MCF 10A (cell line): ENCODE measurements at regions of chr11 and their contacts with region 1.

Region 1: GRCh38 chr11:45771566-45772448 is 33.1 kb upstream of the SLC35C1 start:
- DNase-seq: peak; percentile 79
- H3K4me3 Mint-ChIP-seq: peak overlapping the region; percentile 82
- H3K27ac Mint-ChIP-seq: peak overlapping the region; percentile 70
- H3K4me1 Mint-ChIP-seq: peaks cover 12% of the 10 kb centered on the region
- H3K27me3 Mint-ChIP-seq: no peaks in the 10 kb centered on the region
- CTCF ChIP-seq: peak; percentile 95

Region 2: DNA sequence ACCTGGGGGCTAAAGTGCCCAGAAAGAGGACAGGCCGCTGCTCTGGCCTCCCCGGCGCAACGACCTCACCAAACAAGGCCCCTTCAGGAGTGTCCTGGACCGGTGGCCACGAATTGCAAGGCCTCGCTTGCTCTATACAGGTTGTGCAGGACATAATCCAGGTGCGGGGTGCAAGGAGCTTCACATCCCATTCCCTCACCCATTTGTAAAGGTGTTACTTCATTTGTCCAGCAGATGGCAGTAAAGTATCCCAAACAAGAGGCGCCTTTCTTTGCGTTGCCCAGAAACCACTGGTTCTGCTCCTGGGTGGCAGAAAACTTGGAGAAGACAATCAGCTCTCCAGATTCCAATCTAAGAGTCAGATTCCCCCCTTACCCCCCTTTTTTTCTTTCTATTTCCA is 661.2 kb before region 1 on chr11:
- CTCF ChIA-PET with region 1: interaction called, 3 read pairs
- POLR2A ChIA-PET with region 1: no interaction called
- intact Hi-C with region 1: loop called (anchors 2 kb)
- DNase-seq: peak; percentile 81
- H3K4me3 Mint-ChIP-seq: no peak overlapping the region
- H3K27ac Mint-ChIP-seq: no peak overlapping the region
- H3K4me1 Mint-ChIP-seq: no peaks in the 10 kb centered on the region
- H3K27me3 Mint-ChIP-seq: peaks cover 32% of the 10 kb centered on the region
- CTCF ChIP-seq: peak; percentile 61

Region 3: DNA sequence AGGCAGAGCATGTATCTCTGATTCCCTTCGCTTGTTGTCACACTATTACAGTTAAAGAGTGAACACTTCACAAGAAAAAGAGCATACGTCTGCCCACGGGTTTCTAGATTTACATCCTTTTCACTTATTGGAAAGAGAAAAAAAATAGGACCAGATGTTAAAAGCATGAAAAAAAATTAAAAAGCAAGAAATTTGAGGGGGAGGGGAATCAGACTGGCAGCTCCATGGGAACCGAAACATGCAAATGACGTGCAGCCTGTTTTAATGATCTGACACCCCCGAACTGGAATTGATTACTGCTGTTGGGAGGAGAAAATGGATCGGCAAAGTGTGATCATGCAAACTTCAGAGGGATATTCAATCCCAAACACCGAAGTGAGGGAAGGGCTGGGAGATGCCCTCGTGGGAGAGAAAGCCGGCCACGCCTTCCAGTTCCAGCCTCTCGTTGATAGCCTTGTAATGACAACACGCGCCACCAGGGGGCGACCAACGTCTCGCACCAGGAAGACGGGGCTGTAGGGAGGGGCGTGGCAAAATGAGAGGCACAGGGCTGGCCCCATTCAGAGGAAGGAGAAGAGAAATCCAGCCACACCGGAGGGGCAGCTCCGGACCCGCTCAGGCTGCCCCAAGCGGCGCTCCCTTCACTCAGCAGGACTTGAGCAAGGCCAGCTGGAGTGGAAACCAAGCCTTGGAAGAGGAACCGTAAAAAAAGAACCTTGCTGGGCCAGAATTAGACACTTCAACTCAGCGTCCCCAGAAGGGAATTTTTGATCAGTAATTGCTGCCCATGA is 431.9 kb before region 1 on chr11:
- CTCF ChIA-PET with region 1: interaction called, 70 read pairs
- POLR2A ChIA-PET with region 1: interaction called, 5 read pairs
- intact Hi-C with region 1: loop called (anchors 1 kb)
- DNase-seq: peak; percentile 86
- H3K4me3 Mint-ChIP-seq: no peak overlapping the region
- H3K27ac Mint-ChIP-seq: no peak overlapping the region
- H3K4me1 Mint-ChIP-seq: peaks cover 6% of the 10 kb centered on the region
- H3K27me3 Mint-ChIP-seq: peaks cover 52% of the 10 kb centered on the region
- CTCF ChIP-seq: peak; percentile 90

Region 4: GRCh38 chr11:45405916-45406670 is 365.7 kb before region 1 on chr11:
- CTCF ChIA-PET with region 1: interaction called, 44 read pairs
- POLR2A ChIA-PET with region 1: interaction called, 4 read pairs
- intact Hi-C with region 1: loop called (anchors 1 kb)
- DNase-seq: peak; percentile 27
- H3K4me3 Mint-ChIP-seq: no peak overlapping the region
- H3K27ac Mint-ChIP-seq: no peak overlapping the region
- H3K4me1 Mint-ChIP-seq: no peaks in the 10 kb centered on the region
- H3K27me3 Mint-ChIP-seq: peaks cover 52% of the 10 kb centered on the region
- CTCF ChIP-seq: peak; percentile 53

Region 5: DNA sequence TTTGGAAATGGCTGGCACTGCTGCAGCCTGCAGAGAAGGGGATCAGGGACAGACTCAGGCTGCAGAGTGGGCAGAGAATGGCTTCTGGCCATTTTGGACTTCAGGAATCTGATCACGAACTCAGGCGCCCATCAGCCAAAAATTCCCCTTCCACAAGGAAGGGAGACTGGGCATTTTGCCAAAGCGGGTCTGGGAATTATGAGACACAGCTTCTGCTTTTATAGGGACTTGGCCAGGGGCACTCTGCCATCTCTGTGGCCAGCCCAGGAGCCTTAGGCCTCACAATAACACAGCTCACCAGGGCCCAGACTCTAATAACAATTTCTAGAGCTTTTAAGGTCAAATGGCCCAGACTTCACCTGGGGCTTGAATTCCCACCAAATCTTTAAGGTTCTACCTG is 181.1 kb before region 1 on chr11:
- CTCF ChIA-PET with region 1: no interaction called
- POLR2A ChIA-PET with region 1: no interaction called
- intact Hi-C with region 1: no loop called
- DNase-seq: peak; percentile 60
- H3K4me3 Mint-ChIP-seq: no peak overlapping the region
- H3K27ac Mint-ChIP-seq: no peak overlapping the region
- H3K4me1 Mint-ChIP-seq: no peaks in the 10 kb centered on the region
- H3K27me3 Mint-ChIP-seq: peaks cover 47% of the 10 kb centered on the region
- CTCF ChIP-seq: no peak

Region 6: GRCh38 chr11:45655347-45655756 is 116.5 kb before region 1 on chr11:
- CTCF ChIA-PET with region 1: interaction called, 62 read pairs
- POLR2A ChIA-PET with region 1: interaction called, 3 read pairs
- intact Hi-C with region 1: loop called (anchors 2 kb)
- DNase-seq: peak; percentile 63
- H3K4me3 Mint-ChIP-seq: no peak overlapping the region
- H3K27ac Mint-ChIP-seq: no peak overlapping the region
- H3K4me1 Mint-ChIP-seq: no peaks in the 10 kb centered on the region
- H3K27me3 Mint-ChIP-seq: peaks cover 1% of the 10 kb centered on the region
- CTCF ChIP-seq: peak; percentile 89

Region 7: DNA sequence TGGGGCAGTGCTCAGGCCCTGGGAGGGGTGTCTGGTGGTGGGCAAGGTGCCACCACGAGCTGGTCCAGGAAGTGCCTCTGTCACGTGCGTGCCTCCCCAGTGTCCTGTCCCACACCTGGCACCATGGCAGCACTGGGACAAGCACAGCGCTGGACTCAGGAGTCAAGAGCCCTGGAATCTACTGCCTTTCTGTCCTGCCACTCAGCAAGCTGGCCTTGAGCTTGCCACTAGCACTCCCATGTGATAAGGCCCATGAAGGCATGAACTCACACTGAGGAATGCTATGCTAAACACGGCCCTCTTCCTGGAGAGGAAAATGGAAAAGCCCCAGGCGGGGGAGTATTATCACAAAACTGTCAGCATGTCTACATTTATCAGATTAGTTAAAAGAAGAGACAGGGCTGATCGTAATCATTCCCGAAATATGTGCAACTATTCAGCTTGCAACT is 17.5 kb before region 1 on chr11:
- CTCF ChIA-PET with region 1: interaction called, 27 read pairs
- POLR2A ChIA-PET with region 1: no interaction called
- intact Hi-C with region 1: no loop called
- DNase-seq: no peak
- H3K4me3 Mint-ChIP-seq: no peak overlapping the region
- H3K27ac Mint-ChIP-seq: no peak overlapping the region
- H3K4me1 Mint-ChIP-seq: no peaks in the 10 kb centered on the region
- H3K27me3 Mint-ChIP-seq: peaks cover 41% of the 10 kb centered on the region
- CTCF ChIP-seq: no peak

Region 8: GRCh38 chr11:46006418-46007070 is 234.7 kb after region 1 on chr11:
- CTCF ChIA-PET with region 1: no interaction called
- POLR2A ChIA-PET with region 1: no interaction called
- intact Hi-C with region 1: loop called (anchors 5 kb)
- DNase-seq: peak; percentile 74
- H3K4me3 Mint-ChIP-seq: no peak overlapping the region
- H3K27ac Mint-ChIP-seq: no peak overlapping the region
- H3K4me1 Mint-ChIP-seq: peaks cover 12% of the 10 kb centered on the region
- H3K27me3 Mint-ChIP-seq: no peaks in the 10 kb centered on the region
- CTCF ChIP-seq: peak; percentile 69